Stomach (tissue), 19 donors: ENCODE measurements at regions of chr9 and their contacts with region 1.

Region 1: DNA sequence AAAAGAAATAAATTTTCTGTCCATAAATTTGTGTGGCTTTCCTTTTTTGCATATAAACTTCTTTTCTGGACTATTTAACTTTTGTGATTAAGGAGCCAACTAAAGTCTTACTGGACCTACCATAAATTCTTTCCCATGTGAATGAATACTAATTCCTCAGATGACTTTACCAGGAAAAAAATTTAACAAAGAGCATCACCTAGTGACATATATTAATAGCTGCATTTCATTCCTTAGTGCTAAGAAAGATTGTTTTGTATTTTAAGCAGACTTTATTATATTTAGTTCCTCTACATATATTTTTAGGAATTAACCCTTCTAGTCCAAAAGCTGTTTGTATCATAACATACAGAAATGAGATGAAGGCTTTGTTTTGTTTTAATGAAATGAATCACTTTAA is 64.4 kb downstream of the C9orf85 start:
- DNase-seq: no peak
- H3K4me3 ChIP-seq: no peak overlapping the region
- H3K27ac ChIP-seq: no peak overlapping the region
- H3K4me1 ChIP-seq: peaks cover 0 to 5% (median 0%) of the 10 kb centered on the region in 4 donors
- H3K27me3 ChIP-seq: no peaks in the 10 kb centered on the region
- CTCF ChIP-seq: peak in 3 of 7 experiments; percentile 7 to 26 (median 15)
- EP300 ChIP-seq: no peak
- POLR2A ChIP-seq: no peak

Region 2: DNA sequence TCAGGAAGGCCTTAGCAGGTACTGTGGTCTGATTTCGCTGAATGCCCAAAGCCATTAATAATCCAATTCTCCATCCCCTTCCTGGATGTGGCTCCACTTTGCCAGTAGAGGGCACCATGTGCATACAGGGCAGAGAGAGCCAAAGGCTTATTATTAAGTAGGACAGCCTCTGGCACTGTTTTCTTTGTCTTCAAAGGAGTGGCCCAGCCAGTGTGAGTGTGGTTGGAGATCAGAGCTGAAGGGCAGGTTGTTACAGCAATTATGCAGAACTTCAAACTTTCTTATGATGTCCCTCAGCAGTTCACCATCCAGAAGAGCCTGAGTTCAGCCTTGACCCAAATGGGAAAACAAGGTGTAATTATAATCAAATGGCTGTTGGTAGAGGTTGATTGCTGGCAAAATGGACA is 168.9 kb before region 1 on chr9:
- intact Hi-C with region 1: loop called (anchors 10 kb)
- DNase-seq: peak; percentile 78 to 88
- H3K4me3 ChIP-seq: no peak overlapping the region
- H3K27ac ChIP-seq: peak overlapping the region in 1 of 5 donors; percentile 28
- H3K4me1 ChIP-seq: peaks cover 0 to 11% (median 4%) of the 10 kb centered on the region in 4 donors
- H3K27me3 ChIP-seq: no peaks in the 10 kb centered on the region
- CTCF ChIP-seq: peak in 5 of 7 experiments; percentile 75 to 88 (median 80)
- EP300 ChIP-seq: no peak
- POLR2A ChIP-seq: no peak